ENCODE measurements at regions of chr12 and their contacts with region 1.

Region 1: DNA sequence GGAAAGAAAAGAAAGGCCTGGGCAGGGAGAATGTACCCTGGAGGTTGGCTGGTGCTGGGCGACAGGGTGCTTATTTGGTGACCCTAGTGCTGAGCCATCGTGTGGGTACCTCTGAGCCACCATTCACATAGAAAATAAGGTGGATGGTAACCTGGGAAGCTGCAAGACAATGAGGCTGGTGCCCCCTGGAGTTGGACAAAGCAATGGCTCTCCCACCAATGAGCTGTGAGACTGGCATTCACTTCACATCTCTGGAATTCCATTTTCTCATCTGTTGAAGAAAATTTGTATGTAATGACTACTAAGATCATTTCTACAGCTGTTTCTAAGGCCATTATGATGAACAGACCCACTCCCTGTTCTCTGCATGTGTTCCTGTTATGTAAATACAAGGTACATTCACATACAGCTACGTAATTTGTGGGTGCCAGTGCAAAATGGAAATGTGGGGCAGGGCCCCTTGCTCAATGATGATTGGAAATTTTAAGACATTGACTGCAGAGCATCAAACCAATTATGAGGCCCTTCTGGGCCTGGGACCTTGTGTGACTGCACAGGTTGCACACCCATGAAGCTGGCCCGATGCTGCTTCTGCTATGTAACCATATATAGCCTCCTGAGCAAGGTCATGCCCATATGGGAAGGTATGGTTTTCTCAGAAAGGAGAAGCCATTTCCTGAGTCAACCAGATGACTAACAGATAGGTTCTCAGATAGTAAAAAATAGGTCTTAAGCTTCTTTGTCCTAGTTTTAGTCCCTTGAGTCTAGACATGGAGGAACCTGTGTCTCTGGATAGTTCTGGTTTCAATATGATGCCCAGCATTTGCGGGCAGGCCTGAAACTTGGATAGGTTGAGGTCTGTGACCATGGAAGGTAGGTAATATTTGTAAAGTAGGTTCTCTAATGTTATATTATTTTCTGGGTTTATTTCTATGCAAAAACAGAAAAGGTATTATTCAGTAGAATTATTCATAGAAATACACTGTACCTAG is 63.4 kb upstream of the IGF1 start:
- DNase-seq: peak; percentile 4 to 33 (median 10)
- H3K4me3 ChIP-seq: no peak overlapping the region
- H3K27ac ChIP-seq: no peak overlapping the region
- H3K4me1 ChIP-seq: no peaks in the 10 kb centered on the region
- H3K27me3 ChIP-seq: peaks cover 0 to 2% (median 0%) of the 10 kb centered on the region in 5 experiments

Region 2: GRCh38 chr12:102513272-102513671 is 30.5 kb before region 1 on chr12:
- CTCF ChIA-PET with region 1: interaction called, 10 read pairs
- POLR2A ChIA-PET with region 1: no interaction called
- DNase-seq: no peak
- H3K4me3 ChIP-seq: no peak overlapping the region
- H3K27ac ChIP-seq: no peak overlapping the region
- H3K4me1 ChIP-seq: peaks cover 0 to 6% (median 0%) of the 10 kb centered on the region in 4 experiments
- H3K27me3 ChIP-seq: no peaks in the 10 kb centered on the region

Measured in common myeloid progenitor, CD34-positive (primary cell).